Esophagus muscularis mucosa (tissue), 4 donors: ENCODE measurements at regions of chr16 and their contacts with region 1.

Region 1: GRCh38 chr16:53323924-53324323 is 110.3 kb upstream of the RBL2 start:
- DNase-seq: no peak
- H3K4me3 ChIP-seq: no peak overlapping the region
- H3K27ac ChIP-seq: no peak overlapping the region
- H3K4me1 ChIP-seq: no peaks in the 10 kb centered on the region
- H3K27me3 ChIP-seq: no peaks in the 10 kb centered on the region
- CTCF ChIP-seq: no peak
- EP300 ChIP-seq: no peak
- POLR2A ChIP-seq: no peak

Region 2: DNA sequence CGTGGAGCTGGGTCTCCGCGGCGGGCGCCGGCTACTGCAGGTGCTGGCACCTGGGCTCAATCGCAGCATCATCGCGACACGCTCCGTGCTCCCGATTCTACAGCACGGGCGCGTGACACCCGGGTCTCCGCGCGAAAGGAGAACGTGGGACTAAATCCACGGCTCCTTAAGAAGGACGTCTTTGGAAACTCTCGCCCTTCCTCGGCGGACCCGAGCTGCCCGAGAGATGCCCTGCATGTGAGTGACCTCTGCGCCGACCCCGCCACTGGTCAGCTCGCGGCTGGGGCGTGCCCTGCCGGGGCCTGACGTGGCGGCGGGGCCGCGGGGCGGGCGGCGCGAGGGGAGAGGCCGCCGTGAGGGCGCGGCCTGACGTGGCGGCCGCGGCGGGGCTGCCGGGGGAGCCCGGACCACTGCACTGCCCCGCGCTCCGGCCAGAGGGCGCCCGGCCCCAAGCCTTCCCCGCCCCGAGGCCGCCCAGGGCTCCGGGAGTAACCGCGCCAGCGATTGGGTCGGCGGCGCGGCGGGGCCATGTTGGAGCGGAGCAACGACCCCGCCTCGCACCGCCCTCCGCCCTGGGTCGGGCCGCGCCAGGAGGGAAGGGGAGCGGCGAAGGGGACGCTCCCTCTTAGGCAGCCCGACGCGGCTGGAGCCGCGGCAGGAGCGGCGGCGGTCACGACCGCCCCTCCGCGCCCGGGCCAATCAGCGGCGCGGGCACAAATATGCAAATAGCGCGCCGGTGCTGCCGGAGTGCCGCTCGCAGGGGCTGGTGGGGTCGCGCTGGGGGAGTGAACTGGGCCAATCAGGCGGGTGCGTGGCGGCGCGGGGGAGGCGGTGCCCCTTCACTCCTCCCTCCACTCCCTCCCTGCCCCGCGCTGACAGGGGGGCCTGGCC is 193.5 kb before region 1 on chr16:
- intact Hi-C with region 1: no loop called
- DNase-seq: peak; percentile 99
- H3K4me3 ChIP-seq: peak overlapping the region; percentile 83 to 91 (median 90)
- H3K27ac ChIP-seq: peak overlapping the region; percentile 93 to 97 (median 96)
- H3K4me1 ChIP-seq: peaks cover 22 to 49% (median 43%) of the 10 kb centered on the region in 4 donors
- H3K27me3 ChIP-seq: no peaks in the 10 kb centered on the region
- CTCF ChIP-seq: peak; percentile 70 to 88 (median 80)
- EP300 ChIP-seq: no peak
- POLR2A ChIP-seq: peak; percentile 28

Region 3: GRCh38 chr16:53282975-53283946 is 40.7 kb before region 1 on chr16:
- intact Hi-C with region 1: loop called (anchors 5 kb)
- DNase-seq: no peak
- H3K4me3 ChIP-seq: no peak overlapping the region
- H3K27ac ChIP-seq: no peak overlapping the region
- H3K4me1 ChIP-seq: peaks cover 0 to 21% (median 8%) of the 10 kb centered on the region in 4 donors
- H3K27me3 ChIP-seq: no peaks in the 10 kb centered on the region
- CTCF ChIP-seq: peak; percentile 22 to 50 (median 30)
- EP300 ChIP-seq: no peak
- POLR2A ChIP-seq: no peak

Region 4: DNA sequence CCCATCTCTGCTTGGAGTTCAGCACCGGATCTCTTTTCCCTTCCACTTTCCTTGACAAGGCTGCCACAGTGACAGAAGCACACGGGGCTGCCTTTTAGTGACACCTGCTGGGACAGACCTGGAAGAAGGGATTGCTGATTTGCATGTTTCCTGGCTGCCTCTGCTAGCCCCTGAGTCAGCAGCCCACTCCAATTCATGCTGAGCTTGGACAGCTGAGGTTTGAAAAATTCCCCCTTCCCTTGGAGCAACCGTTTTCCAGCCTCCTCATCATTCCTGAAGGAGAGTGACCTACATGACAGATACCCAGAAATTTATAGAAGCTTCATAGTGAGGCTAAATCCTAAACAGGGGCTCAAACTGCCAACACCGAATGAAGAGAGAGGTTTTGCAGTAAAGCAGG is 91.6 kb after region 1 on chr16:
- intact Hi-C with region 1: no loop called
- DNase-seq: no peak
- H3K4me3 ChIP-seq: no peak overlapping the region
- H3K27ac ChIP-seq: no peak overlapping the region
- H3K4me1 ChIP-seq: no peaks in the 10 kb centered on the region
- H3K27me3 ChIP-seq: peaks cover 0 to 6% (median 0%) of the 10 kb centered on the region in 4 donors
- CTCF ChIP-seq: no peak
- EP300 ChIP-seq: no peak
- POLR2A ChIP-seq: no peak